Activated CD4-positive, alpha-beta T cell treated with anti-CD3 and anti-CD28 coated beads for 36 hours (primary cell): ENCODE measurements at regions of chr1 and their contacts with region 1.

Region 1: DNA sequence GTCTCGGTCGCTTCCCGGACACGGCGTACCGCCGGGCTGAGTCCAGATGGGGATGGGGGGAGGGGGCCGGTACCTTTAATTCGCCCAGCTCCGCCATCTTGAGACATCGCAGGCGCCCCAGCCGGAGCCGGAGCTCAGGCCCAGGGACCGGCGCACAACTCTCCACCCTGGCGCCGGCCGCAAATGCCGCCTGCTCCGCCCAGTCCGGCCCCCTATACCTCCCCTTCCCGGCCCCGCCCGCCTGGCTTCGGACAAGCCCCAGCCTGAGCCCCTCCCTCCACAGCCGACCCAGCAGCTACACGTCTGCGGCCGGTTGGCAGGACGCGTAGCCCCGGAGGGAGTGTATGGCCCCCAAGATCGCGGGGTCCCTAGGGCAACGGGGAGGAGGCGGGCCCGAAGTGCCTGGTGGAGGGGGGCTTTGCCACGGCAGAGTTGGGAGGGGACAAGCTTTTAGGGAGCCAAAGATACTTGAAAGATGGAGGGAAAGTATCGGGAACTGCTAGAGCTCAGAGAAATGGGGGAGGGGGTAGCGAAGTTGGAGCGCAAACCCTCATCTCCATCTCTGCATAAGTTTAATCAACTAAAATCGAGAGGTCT is at the start of gene PIAS3:
- DNase-seq: peak; percentile 93
- ATAC-seq: peak; percentile 86
- H3K4me3 Mint-ChIP-seq: peak within 1 kb of the TSS; percentile 90
- H3K27ac Mint-ChIP-seq: peak within 1 kb of the TSS; percentile 79
- H3K4me1 Mint-ChIP-seq: peaks cover 12% of the 10 kb centered on the region
- H3K27me3 Mint-ChIP-seq: no peaks in the 10 kb centered on the region
- total RNA-seq, gene PIAS3: 20.0 to 22.0 TPM

Region 2: DNA sequence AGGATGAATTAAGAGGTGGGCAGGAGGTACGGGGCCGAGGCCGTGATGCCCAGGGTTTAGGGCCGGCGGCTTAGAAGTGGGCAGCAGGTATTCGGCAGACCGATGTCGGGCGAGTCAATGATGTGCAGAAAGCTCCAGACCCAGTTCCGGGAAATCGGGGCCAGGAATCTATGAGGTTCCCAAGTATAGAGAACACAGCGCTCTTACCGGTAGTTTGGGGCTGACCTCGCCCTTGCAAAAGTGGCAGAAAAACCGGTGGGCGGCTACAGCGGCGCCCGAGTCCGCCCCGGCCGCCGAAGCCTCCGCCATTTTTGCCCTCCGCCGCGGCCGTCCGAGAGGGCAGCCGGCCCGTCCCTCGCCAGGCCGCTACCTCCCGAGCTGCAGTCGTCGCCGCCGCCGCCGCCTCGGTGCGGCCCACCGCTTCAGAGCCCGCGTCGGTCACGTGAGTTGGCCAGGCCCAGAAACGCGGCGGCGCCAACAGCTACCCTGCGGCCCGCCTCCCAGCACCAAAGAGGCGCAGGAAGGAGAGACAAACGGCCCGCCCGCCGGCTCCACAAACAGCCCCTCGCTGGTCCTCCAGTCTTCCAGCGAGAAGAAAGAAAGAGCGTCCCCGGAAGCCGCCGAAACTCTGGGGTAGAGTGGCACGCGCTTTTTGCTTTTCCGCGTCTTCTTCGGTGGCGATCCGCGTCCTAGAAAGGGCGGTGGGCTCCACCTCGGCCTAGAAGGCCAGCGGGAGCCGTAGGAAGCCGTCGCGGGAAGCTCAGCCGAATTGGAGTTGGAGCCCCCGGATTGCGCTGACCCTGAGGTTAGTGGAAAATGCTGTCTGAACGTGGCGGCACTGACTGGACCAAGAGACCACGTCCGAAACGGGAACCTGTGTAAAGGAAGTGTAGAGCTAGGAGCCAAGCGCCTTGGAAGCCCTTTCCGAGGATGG is 35.2 kb before region 1 on chr1 and contains the starts of genes POLR3C and RNF115:
- CTCF ChIA-PET with region 1: interaction called, 12 read pairs
- POLR2A ChIA-PET with region 1: interaction called, 3 read pairs
- intact Hi-C with region 1: loop called in 1 of 2 experiments (anchors 2 kb)
- DNase-seq: peak; percentile 91
- ATAC-seq: peak; percentile 67
- H3K4me3 Mint-ChIP-seq: peak within 1 kb of the TSS; percentile 97
- H3K27ac Mint-ChIP-seq: peak within 1 kb of the TSS; percentile 98
- H3K4me1 Mint-ChIP-seq: peaks cover 44% of the 10 kb centered on the region
- H3K27me3 Mint-ChIP-seq: no peaks in the 10 kb centered on the region
- total RNA-seq, gene POLR3C: 34.2 to 42.6 TPM
- total RNA-seq, gene RNF115: 11.8 to 13.9 TPM

Region 3: DNA sequence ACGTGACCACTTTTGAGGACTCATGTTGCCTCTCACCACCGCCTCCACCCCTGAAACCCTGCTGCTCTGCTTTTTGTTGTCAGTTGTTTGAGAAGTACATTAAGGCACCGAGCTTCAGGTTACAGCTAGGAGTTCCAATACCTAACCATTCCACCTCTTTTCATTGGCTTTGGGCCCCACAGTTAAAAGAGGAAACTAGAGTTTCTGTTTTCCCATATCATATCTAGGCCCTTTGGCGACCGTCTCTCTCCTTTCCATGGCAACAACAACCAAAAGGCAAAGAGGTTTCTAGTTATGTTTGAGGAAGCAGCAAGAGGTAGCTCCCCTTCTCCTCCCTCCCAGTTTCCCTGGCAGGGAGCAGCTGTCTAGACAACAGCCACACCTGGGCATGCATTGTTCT is 20.8 kb after region 1 on chr1:
- CTCF ChIA-PET with region 1: interaction called, 5 read pairs
- POLR2A ChIA-PET with region 1: interaction called, 8 read pairs
- intact Hi-C with region 1: loop called in 1 of 2 experiments (anchors 2 kb)
- DNase-seq: no peak
- ATAC-seq: no peak
- H3K4me3 Mint-ChIP-seq: no peak overlapping the region
- H3K27ac Mint-ChIP-seq: no peak overlapping the region
- H3K4me1 Mint-ChIP-seq: peaks cover 4% of the 10 kb centered on the region
- H3K27me3 Mint-ChIP-seq: peaks cover 14% of the 10 kb centered on the region

Region 4: DNA sequence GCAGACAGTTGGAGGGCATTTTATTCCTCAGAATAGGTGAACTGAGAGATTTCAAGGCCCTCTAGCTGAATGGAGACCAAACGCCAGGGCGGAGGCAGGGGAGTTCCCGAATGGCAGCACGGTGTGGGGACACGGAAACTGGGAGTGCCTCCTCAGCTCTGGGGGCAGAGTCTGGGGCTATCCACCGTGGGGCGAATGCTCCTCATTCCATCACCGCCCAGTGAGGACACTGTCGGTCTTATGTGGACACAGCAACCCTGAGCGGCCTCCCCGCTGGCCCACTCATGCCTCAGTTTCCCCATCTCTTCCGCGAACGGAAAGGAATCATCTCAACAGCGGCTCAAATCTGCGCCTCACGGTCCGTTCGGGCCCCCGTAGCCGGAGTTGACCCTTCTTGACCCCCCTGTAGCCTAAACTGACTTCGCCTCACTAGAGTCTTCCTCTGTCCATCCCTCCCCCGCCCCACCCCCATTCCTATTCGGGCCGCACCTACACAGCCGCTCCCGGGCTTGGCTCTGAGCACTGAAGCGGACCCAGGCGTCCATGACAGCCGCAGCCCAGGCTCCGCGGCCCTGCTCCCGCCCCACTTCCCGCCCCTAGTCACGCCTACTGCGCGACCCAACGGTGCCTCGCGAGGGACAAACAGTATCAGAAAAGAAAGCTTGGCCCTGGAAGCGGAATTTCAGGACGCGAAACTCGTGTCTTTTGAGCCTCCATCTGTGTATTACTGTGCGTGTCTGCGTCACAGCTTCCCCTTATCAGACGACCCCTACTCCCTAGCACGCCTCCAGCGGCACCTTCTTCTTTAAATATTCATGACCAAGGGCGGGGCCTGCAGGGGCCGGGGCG is 59.4 kb after region 1 on chr1 and contains the start of gene PEX11B:
- CTCF ChIA-PET with region 1: interaction called, 4 read pairs
- POLR2A ChIA-PET with region 1: interaction called, 5 read pairs
- intact Hi-C with region 1: loop called (anchors 1 kb)
- DNase-seq: peak; percentile 94
- ATAC-seq: peak; percentile 89
- H3K4me3 Mint-ChIP-seq: peak within 1 kb of the TSS; percentile 93
- H3K27ac Mint-ChIP-seq: peak within 1 kb of the TSS; percentile 94
- H3K4me1 Mint-ChIP-seq: peaks cover 46% of the 10 kb centered on the region
- H3K27me3 Mint-ChIP-seq: no peaks in the 10 kb centered on the region
- total RNA-seq, gene PEX11B: 22.6 to 26.4 TPM

Region 5: DNA sequence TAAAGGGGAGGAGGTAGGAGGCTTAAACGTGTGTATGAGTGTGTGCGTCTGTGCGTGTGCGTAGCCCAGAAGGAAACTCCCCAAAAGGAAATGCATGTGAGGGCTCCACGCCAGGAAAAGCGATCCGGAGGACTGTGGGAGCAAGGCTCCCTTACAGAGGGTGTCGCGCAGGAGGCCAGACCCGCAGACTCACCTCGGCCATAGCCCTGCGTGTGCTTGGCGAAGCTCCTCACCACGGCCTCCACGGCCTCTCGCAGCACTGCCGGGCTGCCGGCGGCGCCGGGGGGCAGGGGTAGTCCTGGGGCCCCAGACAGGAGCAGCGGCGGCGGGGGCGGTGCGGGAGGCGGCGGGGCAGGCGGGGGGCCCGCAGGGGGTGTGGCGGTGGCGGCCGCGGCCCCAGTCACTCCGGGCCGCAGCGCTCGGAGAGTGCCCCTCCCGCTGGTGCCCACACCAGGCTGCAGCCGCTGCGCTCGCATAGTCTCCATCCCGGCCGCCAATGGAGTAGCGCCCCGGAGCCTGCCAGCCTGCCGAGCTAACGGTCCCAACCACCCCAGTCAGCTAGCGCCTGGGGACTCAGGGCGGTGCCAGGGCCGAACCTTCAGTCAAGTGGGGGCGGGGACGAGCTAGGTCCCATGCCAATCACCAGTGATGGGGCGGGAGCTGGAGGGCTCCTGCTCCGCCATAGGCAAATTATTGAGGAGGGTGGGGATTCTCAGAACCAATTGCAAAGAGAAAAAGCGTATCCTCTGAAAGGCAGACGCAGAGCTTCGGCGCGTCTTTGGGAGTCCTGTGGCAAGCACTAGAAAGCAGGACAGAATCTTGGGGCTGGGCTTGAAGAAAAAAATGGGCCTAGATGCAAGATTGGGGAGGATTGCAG is 98.7 kb after region 1 on chr1 and contains the start of gene LIX1L:
- CTCF ChIA-PET with region 1: interaction called, 8 read pairs
- POLR2A ChIA-PET with region 1: interaction called, 5 read pairs
- intact Hi-C with region 1: loop called (anchors 1 to 2 kb)
- DNase-seq: peak; percentile 98
- ATAC-seq: peak; percentile 89
- H3K4me3 Mint-ChIP-seq: peak within 1 kb of the TSS; percentile 87
- H3K27ac Mint-ChIP-seq: peak within 1 kb of the TSS; percentile 93
- H3K4me1 Mint-ChIP-seq: peaks cover 59% of the 10 kb centered on the region
- H3K27me3 Mint-ChIP-seq: no peaks in the 10 kb centered on the region
- total RNA-seq, gene LIX1L: 44.9 to 49.4 TPM

Region 6: GRCh38 chr1:145996433-145997015 is 137.5 kb after region 1 on chr1 and contains the start of gene TXNIP:
- CTCF ChIA-PET with region 1: interaction called, 3 read pairs
- POLR2A ChIA-PET with region 1: interaction called, 3 read pairs
- intact Hi-C with region 1: loop called in 1 of 2 experiments (anchors 1 kb)
- DNase-seq: peak; percentile 97
- ATAC-seq: peak; percentile 82
- H3K4me3 Mint-ChIP-seq: peak within 1 kb of the TSS; percentile 92
- H3K27ac Mint-ChIP-seq: peak within 1 kb of the TSS; percentile 99
- H3K4me1 Mint-ChIP-seq: peaks cover 68% of the 10 kb centered on the region
- H3K27me3 Mint-ChIP-seq: no peaks in the 10 kb centered on the region
- total RNA-seq, gene TXNIP: 112 TPM

Region 7: GRCh38 chr1:146049436-146049835 is 190.4 kb after region 1 on chr1:
- CTCF ChIA-PET with region 1: interaction called, 3 read pairs
- POLR2A ChIA-PET with region 1: interaction called, 19 read pairs
- intact Hi-C with region 1: no loop called
- DNase-seq: no peak
- ATAC-seq: no peak
- H3K4me3 Mint-ChIP-seq: no peak overlapping the region
- H3K27ac Mint-ChIP-seq: no peak overlapping the region
- H3K4me1 Mint-ChIP-seq: peaks cover 26% of the 10 kb centered on the region
- H3K27me3 Mint-ChIP-seq: no peaks in the 10 kb centered on the region